Activated CD4-positive, alpha-beta memory T cell treated with anti-CD3 and anti-CD28 coated beads for 36 hours (primary cell): ENCODE measurements at regions of chr22 and their contacts with region 1.

Region 1: DNA sequence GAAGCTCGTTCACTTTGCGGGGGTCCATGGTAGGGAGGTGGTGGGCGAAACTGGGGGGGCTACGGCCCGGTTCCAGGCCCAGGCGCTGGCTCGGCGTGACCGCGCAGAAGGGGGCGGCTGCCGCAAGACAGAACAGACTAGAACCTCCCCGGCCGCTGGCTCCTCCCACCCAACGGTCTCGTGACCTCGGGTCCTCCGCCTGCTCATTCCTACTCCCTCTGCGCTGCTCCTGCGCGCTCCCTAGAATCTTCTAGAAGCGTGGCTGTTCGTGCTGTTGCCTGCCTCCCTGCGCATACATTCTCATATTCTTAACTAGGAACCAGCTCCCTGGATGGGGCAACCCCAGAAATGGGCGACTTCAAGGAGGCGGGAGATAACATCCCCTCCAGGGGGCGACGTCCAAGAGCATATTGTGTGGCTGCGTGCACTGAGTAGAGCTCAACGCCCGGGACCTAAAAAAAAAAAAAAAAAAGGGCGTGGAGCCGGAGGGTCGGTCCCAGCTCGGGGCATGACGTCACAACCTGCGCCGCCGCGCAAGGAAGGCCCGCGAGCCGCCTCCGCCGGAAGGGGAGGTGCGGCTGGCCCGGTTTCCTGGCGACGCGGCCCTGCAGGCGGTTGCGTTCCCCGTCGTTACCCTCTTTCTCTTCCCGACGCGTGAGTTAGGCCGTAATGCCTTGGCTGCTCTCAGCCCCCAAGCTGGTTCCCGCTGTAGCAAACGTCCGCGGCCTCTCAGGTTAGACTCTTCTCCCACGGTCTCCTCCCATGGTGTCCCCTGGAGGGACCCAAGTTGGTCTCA is at the starts of genes ST13 and XPNPEP3:
- DNase-seq: peak; percentile 98
- H3K4me3 Mint-ChIP-seq: peak within 1 kb of the TSS; percentile 98
- H3K27ac Mint-ChIP-seq: peak within 1 kb of the TSS; percentile 99
- H3K4me1 Mint-ChIP-seq: peaks cover 48% of the 10 kb centered on the region
- H3K27me3 Mint-ChIP-seq: no peaks in the 10 kb centered on the region
- total RNA-seq, gene ST13: 240 to 263 TPM
- total RNA-seq, gene XPNPEP3: 19.4 to 20.1 TPM

Region 2: DNA sequence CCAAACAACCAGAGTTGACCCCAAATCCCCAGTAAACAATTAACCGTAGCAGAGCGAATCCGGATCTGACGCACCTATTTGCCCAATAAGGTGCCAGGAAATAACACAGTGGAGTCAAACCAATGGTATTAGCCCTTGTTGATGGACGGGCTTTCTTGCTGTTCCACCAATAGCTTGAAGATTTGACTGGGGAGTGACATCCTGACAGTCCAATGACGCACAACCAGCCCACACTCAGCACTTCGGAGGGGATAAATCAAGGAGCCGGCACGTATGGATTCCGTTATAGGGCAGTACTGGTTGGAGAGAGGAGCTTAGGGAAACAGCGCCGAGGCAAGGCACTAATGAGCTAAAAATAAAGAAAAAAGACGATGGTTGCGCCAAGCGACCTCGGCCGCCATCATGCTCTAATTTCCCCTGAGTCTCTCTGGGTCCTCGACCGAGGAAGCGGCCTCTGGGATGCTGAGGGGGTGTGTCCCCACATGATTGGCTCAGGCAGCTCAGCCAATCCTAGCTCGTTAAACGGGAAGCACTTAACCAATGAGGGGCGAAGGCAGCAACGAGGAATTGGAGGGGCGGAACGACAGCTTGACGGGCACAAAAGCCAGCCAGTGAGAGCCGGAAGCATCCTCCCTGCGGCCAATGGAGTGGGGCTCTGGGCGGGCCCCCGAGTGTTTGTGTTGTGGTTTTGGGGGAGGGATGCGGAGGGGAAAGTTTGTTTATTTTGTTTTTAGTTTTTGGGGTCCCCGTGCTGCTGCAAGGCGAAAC is 812.4 kb before region 1 on chr22:
- CTCF ChIA-PET with region 1: no interaction called
- POLR2A ChIA-PET with region 1: no interaction called
- intact Hi-C with region 1: loop called (anchors 10 kb)
- DNase-seq: peak; percentile 99
- H3K4me3 Mint-ChIP-seq: peak overlapping the region; percentile 93
- H3K27ac Mint-ChIP-seq: peak overlapping the region; percentile 99
- H3K4me1 Mint-ChIP-seq: peaks cover 27% of the 10 kb centered on the region
- H3K27me3 Mint-ChIP-seq: peaks cover 6% of the 10 kb centered on the region

Region 3: DNA sequence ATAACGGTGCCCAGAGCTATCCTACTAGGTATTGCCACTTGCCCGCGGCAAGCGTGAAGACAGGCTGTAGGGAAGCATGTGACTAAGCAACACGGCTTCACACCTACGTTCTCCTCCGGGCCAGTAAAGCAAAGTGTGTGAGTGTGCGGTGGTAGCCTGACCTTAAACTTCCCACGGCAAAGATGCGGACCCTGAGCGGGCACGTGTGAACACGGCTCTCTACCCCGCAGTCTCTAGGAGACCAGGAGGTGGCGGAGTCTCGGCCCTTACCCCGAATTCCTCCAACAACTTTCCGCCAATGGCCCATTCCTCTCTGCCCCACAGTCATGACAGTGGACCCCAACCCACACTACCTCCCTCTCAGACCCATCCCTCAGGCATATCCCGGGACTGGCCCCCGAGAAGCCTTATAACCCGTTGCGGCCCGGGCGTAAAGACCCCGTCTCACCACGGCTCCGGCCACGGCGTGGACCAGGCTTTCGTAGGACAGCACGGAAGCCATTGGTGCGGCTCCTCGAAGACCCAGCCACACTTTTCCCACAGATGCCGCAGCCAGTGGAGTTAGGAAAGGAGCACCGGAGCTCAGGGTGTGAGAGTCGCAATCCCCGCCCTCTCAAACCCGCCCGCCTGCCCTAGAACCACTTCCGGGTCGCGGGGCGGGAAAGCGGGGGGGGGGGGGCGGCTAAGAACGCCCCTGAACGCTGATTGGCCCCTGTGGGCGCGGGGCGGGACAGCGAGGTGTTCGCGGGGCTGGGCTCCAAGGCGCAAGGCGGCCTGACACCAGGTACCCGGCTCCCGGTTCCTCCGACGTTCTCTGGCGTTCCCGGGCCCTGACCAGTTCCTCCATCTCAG is 37.7 kb before region 1 on chr22 and contains the start of gene SLC25A17:
- CTCF ChIA-PET with region 1: interaction called, 3 read pairs
- POLR2A ChIA-PET with region 1: interaction called, 9 read pairs
- intact Hi-C with region 1: loop called (anchors 1 kb)
- DNase-seq: peak; percentile 92
- H3K4me3 Mint-ChIP-seq: peak within 1 kb of the TSS; percentile 92
- H3K27ac Mint-ChIP-seq: peak within 1 kb of the TSS; percentile 76
- H3K4me1 Mint-ChIP-seq: peaks cover 33% of the 10 kb centered on the region
- H3K27me3 Mint-ChIP-seq: no peaks in the 10 kb centered on the region
- total RNA-seq, gene SLC25A17: 29.3 to 30.8 TPM

Region 4: GRCh38 chr22:40950962-40951794 is 94.5 kb after region 1 on chr22 and contains the start of gene RBX1:
- CTCF ChIA-PET with region 1: no interaction called
- POLR2A ChIA-PET with region 1: interaction called, 3 read pairs
- intact Hi-C with region 1: loop called (anchors 5 kb)
- DNase-seq: peak; percentile 99
- H3K4me3 Mint-ChIP-seq: peak within 1 kb of the TSS; percentile 99
- H3K27ac Mint-ChIP-seq: peak within 1 kb of the TSS; percentile 99
- H3K4me1 Mint-ChIP-seq: peaks cover 30% of the 10 kb centered on the region
- H3K27me3 Mint-ChIP-seq: no peaks in the 10 kb centered on the region
- total RNA-seq, gene RBX1: 96.9 to 99.4 TPM

Region 5: DNA sequence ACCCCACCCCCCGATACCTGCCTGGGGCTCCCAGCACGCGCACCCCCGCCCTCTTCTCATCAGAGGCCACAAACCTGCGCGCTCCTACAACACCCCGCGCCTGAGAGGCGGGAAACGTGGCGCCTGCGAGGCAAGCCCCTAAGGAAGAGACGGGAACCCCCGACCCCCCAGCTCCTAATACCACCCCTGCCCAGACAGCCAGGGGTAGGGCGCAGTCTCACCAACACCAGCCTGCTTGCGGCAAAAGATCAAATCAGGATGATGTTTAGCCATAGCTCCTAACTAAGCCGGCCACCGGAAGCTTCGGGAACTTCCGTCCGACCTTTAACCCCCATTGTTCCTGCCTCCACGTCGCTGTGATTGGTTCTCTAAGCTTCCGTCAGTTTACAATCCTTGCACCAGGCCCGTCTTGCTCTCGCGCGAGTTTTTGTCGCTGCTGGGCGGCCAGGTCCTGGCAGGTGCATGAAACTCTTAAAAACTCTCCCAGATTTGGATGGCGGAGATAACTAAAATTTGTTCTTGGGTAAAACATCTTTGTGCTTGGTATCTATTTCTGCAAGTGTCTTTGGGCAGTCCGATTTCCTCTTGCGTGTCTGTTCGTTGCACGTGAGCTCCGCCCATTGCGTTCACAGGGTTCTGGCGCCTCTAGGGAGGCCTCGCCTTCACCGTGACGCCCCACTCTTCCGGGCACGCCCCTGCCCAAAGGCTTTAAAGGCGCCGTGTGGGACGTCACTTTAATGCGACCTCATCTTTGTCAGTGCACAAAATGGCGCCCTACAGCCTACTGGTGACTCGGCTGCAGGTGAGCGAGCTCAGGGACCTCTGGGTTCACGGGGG is 611.9 kb after region 1 on chr22 and contains the starts of genes ACO2 and PHF5A:
- CTCF ChIA-PET with region 1: no interaction called
- POLR2A ChIA-PET with region 1: no interaction called
- intact Hi-C with region 1: loop called (anchors 5 kb)
- DNase-seq: peak; percentile 99
- H3K4me3 Mint-ChIP-seq: peak within 1 kb of the TSS; percentile 93
- H3K27ac Mint-ChIP-seq: peak within 1 kb of the TSS; percentile 99
- H3K4me1 Mint-ChIP-seq: peaks cover 51% of the 10 kb centered on the region
- H3K27me3 Mint-ChIP-seq: no peaks in the 10 kb centered on the region
- total RNA-seq, gene ACO2: 103 to 105 TPM
- total RNA-seq, gene PHF5A: 55.4 to 60.0 TPM